AG04450 (cell line): ENCODE measurements at regions of chr13 and their contacts with region 1.

Region 1: DNA sequence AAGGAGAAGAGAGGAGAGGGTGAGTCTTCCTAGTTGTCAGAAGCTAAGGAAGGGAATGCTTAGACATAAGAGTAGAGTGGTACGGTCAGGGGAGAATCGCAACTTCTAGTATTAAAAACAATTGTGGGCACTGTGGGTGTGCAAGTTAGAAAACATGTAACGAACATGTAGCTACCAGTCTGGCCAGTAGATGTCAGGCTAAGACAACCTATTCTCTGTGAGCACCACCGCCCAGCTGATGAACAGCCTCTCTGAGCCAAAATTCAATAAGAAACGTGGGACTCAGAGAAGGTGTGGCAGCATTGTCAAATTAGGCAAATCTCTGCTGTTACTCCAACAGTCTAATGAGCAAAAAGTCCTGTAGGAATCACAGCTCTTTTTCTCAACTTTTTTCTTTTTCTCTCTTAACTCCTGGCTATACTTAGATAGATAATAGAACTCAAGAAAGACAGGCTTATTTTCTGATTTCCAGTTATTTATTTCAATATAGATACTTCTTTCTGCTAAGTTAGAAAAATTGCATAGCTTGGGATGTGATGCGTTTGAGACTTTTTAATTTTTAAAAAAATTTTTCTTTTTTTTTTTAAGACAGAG is 186.2 kb downstream of the USP12 start:
- DNase-seq: peak; percentile 54
- H3K4me3 ChIP-seq: no peak overlapping the region
- H3K27ac ChIP-seq: no peak overlapping the region
- H3K27me3 ChIP-seq: no peaks in the 10 kb centered on the region
- CTCF ChIP-seq: peak; percentile 77

Region 2: GRCh38 chr13:26325876-26326275 is 659.5 kb before region 1 on chr13:
- CTCF ChIA-PET with region 1: no interaction called
- POLR2A ChIA-PET with region 1: no interaction called
- DNase-seq: no peak
- H3K4me3 ChIP-seq: no peak overlapping the region
- H3K27ac ChIP-seq: no peak overlapping the region
- H3K27me3 ChIP-seq: no peaks in the 10 kb centered on the region
- CTCF ChIP-seq: no peak

Region 3: DNA sequence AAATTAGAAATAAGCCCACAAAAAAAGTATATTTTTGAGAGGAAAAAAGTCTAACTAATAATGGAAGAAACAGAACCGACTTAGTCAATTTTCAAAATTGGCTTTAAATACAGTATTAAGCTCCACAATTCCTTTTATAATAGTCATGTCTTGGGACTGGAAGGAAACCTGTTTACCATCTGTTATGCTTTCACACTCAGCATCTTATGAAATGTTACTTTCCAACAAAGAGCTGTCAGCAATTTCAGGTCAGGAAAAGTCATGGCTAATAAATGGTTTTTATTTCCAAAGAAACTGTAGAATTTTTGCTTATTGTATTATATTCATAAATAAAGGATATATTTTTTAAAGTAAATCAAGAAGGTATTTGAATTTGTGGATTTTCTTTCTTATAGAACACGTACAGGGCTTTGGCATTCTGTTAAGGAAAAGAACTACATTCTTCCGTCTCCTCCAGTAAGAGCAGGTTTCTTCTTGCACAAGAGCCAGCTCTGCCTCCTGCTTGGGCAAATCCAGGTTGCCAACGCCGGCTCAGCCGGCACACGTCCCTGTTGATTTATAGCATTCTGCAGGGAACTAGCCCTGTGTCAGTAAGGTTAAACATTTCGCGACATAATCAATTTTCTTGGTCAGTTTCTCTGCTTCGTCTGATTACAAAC is 171.9 kb before region 1 on chr13:
- CTCF ChIA-PET with region 1: no interaction called
- POLR2A ChIA-PET with region 1: no interaction called
- DNase-seq: no peak
- H3K4me3 ChIP-seq: no peak overlapping the region
- H3K27ac ChIP-seq: no peak overlapping the region
- H3K27me3 ChIP-seq: peaks cover 7% of the 10 kb centered on the region
- CTCF ChIP-seq: no peak

Region 4: GRCh38 chr13:26996965-26997752 is 11.8 kb after region 1 on chr13:
- CTCF ChIA-PET with region 1: interaction called, 16 read pairs
- POLR2A ChIA-PET with region 1: no interaction called
- DNase-seq: no peak
- H3K4me3 ChIP-seq: no peak overlapping the region
- H3K27ac ChIP-seq: no peak overlapping the region
- H3K27me3 ChIP-seq: peaks cover 24% of the 10 kb centered on the region
- CTCF ChIP-seq: no peak

Region 5: DNA sequence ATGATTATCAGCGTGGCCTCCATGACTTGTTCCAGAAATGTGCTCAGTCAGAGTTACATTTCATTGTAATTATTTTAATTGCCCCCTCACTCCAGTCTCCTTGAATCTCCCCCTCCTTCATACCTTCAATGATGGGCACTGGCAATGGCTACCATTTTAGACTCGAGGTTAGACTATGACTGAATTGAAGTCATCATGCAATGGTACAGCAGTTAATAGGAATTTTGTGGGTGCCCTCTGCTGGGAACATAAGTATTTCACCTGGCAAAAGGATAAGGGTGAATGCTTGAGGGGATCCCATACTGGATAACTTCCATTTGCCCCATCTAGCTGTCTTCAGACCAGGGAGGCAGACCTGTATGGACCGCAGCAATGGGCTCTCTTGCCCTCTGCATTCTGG is 218.5 kb after region 1 on chr13:
- CTCF ChIA-PET with region 1: interaction called, 12 read pairs
- POLR2A ChIA-PET with region 1: no interaction called
- DNase-seq: no peak
- H3K4me3 ChIP-seq: no peak overlapping the region
- H3K27ac ChIP-seq: no peak overlapping the region
- H3K27me3 ChIP-seq: no peaks in the 10 kb centered on the region
- CTCF ChIP-seq: peak; percentile 30

Region 6: DNA sequence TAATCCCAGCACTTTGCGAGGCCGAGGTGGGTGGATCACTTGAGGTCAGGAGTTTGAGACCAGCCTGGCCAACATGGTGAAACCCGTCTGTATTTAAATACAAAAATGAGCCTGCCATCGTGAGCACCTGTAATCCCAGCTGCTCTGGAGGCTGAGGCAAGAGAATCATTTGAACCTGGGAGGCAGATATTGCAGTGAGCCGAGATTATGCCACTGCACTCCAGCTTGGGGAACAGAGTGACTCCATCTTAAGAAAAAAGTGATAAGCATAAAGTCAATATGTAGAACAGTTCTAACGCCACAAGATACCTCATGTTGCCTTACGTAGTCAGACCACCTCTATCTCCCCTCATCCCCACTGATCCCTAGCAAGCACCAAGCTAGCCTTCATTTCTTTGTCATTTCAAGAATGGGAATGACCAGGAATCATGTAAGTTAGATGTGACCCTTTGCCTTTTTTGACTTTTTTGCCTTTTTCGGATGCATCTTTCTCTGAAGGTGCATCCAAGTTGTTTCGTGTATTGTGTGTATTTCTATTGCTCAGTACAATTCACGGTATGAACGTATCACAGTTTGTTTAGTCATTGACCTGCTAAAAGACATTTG is 272.4 kb after region 1 on chr13:
- CTCF ChIA-PET with region 1: interaction called, 15 read pairs
- POLR2A ChIA-PET with region 1: interaction called, 3 read pairs
- DNase-seq: no peak
- H3K4me3 ChIP-seq: no peak overlapping the region
- H3K27ac ChIP-seq: no peak overlapping the region
- H3K27me3 ChIP-seq: no peaks in the 10 kb centered on the region
- CTCF ChIP-seq: no peak

Region 7: GRCh38 chr13:27270594-27271520 is 285.5 kb after region 1 on chr13 and contains the start of gene RASL11A:
- CTCF ChIA-PET with region 1: interaction called, 14 read pairs
- POLR2A ChIA-PET with region 1: no interaction called
- DNase-seq: peak; percentile 82
- H3K4me3 ChIP-seq: peak within 1 kb of the TSS; percentile 84
- H3K27ac ChIP-seq: peak within 1 kb of the TSS; percentile 73
- H3K27me3 ChIP-seq: peaks cover 3% of the 10 kb centered on the region
- CTCF ChIP-seq: peak; percentile 73
- polyA plus RNA-seq, gene RASL11A: 13.5 and 14.4 TPM in 2 replicates

Region 8: GRCh38 chr13:27293873-27294515 is 308.6 kb after region 1 on chr13:
- CTCF ChIA-PET with region 1: no interaction called
- POLR2A ChIA-PET with region 1: no interaction called
- DNase-seq: no peak
- H3K4me3 ChIP-seq: no peak overlapping the region
- H3K27ac ChIP-seq: no peak overlapping the region
- H3K27me3 ChIP-seq: peaks cover 22% of the 10 kb centered on the region
- CTCF ChIP-seq: no peak

Region 9: DNA sequence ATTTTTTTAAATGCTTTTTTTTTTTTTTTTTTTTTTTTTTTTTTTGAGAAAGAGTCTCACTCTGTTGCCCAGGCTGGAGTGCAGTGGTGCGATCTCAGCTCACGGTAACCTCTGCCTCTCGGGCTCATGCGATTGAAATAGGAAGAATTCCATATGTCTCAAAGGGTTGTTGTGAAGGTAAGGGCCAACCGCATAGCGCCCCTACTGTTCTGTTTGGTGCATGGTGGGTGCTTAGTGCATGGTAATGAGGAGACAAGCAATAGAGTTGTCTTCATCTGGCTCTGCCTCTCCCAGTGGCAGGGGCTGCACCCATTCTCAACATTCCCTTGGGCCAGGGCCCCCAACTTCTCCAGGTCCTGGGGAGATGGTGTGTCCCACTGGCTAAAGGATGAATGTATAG is 353.9 kb after region 1 on chr13:
- CTCF ChIA-PET with region 1: interaction called, 23 read pairs
- POLR2A ChIA-PET with region 1: interaction called, 3 read pairs
- DNase-seq: no peak
- H3K4me3 ChIP-seq: no peak overlapping the region
- H3K27ac ChIP-seq: no peak overlapping the region
- H3K27me3 ChIP-seq: peaks cover 2% of the 10 kb centered on the region
- CTCF ChIP-seq: peak; percentile 67

Region 10: GRCh38 chr13:27362064-27362883 is 376.9 kb after region 1 on chr13:
- CTCF ChIA-PET with region 1: interaction called, 365 read pairs
- POLR2A ChIA-PET with region 1: interaction called, 6 read pairs
- DNase-seq: peak; percentile 46
- H3K4me3 ChIP-seq: peak overlapping the region; percentile 66
- H3K27ac ChIP-seq: no peak overlapping the region
- H3K27me3 ChIP-seq: peaks cover 6% of the 10 kb centered on the region
- CTCF ChIP-seq: peak; percentile 97